Naive thymus-derived CD8-positive, alpha-beta T cell (primary cell): ENCODE measurements at regions of chr5 and their contacts with region 1.

Region 1: GRCh38 chr5:173035904-173036707 is 20.0 kb upstream of the CREBRF start:
- DNase-seq: no peak
- ATAC-seq: no peak
- H3K4me3 Mint-ChIP-seq: peak overlapping the region; percentile 72 to 89 (median 84)
- H3K27ac Mint-ChIP-seq: peak overlapping the region; percentile 66 to 100 (median 96)
- H3K4me1 Mint-ChIP-seq: peaks cover 30 to 73% (median 60%) of the 10 kb centered on the region in 4 donors
- H3K27me3 Mint-ChIP-seq: no peaks in the 10 kb centered on the region

Region 2: GRCh38 chr5:173004013-173004412 is 32.1 kb before region 1 on chr5:
- POLR2A ChIA-PET with region 1: no interaction called
- DNase-seq: no peak
- ATAC-seq: no peak
- H3K4me3 Mint-ChIP-seq: peak overlapping the region in 6 of 10 donors; percentile 4 to 74 (median 27)
- H3K27ac Mint-ChIP-seq: peak overlapping the region; percentile 17 to 93 (median 58)
- H3K4me1 Mint-ChIP-seq: peaks cover 53 to 88% (median 84%) of the 10 kb centered on the region in 4 donors
- H3K27me3 Mint-ChIP-seq: no peaks in the 10 kb centered on the region

Region 3: GRCh38 chr5:173057062-173057924 is 21.2 kb after region 1 on chr5:
- POLR2A ChIA-PET with region 1: interaction called, 26 read pairs
- DNase-seq: peak; percentile 97 to 99 (median 98)
- ATAC-seq: peak; percentile 81 to 83
- H3K4me3 Mint-ChIP-seq: peak overlapping the region; percentile 91 to 97 (median 94)
- H3K27ac Mint-ChIP-seq: peak overlapping the region; percentile 83 to 98 (median 96)
- H3K4me1 Mint-ChIP-seq: peaks cover 18 to 60% (median 47%) of the 10 kb centered on the region in 4 donors
- H3K27me3 Mint-ChIP-seq: no peaks in the 10 kb centered on the region

Region 4: GRCh38 chr5:173420108-173420507 is 384.0 kb after region 1 on chr5:
- POLR2A ChIA-PET with region 1: no interaction called
- DNase-seq: no peak
- ATAC-seq: no peak
- H3K4me3 Mint-ChIP-seq: no peak overlapping the region
- H3K27ac Mint-ChIP-seq: no peak overlapping the region
- H3K4me1 Mint-ChIP-seq: no peaks in the 10 kb centered on the region
- H3K27me3 Mint-ChIP-seq: peaks cover under 1 to 16% (median 5%) of the 10 kb centered on the region in 5 donors